Activated CD8-positive, alpha-beta T cell treated with anti-CD3 and anti-CD28 coated beads, Interleukin-2, amount 10 ng/mL, durations not matched to agents 7 days and 5 days (primary cell): ENCODE measurements at regions of chr11 and their contacts with region 1.

Region 1: DNA sequence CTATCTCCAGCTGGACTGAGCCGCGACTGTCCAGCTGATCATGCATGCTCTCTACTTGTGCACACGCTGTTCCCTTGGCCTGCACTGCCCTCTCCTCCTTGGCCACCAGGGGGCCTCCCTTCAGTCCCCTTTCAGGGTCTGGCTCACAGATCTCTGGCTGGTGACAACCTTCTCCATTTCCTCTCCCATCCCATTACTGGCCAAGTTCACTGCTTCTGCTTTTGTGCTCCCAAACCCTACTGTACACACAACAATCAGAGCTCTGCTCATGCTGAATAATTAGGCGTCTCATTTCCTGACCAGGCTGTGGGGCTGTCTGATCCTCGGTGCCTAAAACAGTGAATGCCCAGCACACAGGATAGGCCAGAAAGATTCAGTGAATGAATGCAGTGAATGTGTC is 224.0 kb upstream of the NARS2 start:
- DNase-seq: peak; percentile 50
- ATAC-seq: peak; percentile 77
- H3K4me3 Mint-ChIP-seq: no peak overlapping the region
- H3K27ac Mint-ChIP-seq: no peak overlapping the region
- H3K4me1 Mint-ChIP-seq: no peaks in the 10 kb centered on the region
- H3K27me3 Mint-ChIP-seq: peaks cover 2% of the 10 kb centered on the region

Region 2: DNA sequence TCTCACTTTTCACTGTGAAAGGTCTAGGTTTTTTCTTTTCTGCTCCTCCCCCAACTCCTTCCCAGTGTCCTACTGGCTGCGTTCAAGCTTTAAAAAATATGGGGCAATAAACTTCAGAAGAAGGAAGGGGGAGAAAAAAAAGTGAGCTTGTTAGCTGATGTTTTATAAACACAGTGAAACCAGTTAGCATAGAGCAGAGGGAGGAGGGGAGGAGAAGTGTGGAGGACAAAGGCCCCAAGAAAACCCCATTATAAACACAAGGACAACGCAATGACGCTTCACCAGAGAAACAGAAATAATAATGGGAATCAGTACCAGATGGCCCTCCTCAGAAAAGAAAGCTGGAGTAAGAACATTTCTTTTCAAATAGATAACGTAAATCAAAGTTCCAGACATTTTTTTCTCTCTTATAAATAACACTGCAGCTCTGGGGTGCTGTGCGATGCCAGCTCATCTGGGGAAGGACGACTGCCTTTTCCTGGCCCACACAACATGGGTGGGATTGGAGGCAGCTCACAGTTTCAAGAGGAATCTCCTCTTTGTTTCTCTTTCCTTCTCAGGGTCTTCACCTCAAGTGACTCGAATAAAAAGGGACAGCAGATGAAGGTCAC is 11.4 kb after region 1 on chr11:
- CTCF ChIA-PET with region 1: interaction called, 19 read pairs
- POLR2A ChIA-PET with region 1: no interaction called
- DNase-seq: no peak
- ATAC-seq: no peak
- H3K4me3 Mint-ChIP-seq: no peak overlapping the region
- H3K27ac Mint-ChIP-seq: no peak overlapping the region
- H3K4me1 Mint-ChIP-seq: no peaks in the 10 kb centered on the region
- H3K27me3 Mint-ChIP-seq: peaks cover 5% of the 10 kb centered on the region